ENCODE measurements at regions of chrX and their contacts with region 1.

Region 1: DNA sequence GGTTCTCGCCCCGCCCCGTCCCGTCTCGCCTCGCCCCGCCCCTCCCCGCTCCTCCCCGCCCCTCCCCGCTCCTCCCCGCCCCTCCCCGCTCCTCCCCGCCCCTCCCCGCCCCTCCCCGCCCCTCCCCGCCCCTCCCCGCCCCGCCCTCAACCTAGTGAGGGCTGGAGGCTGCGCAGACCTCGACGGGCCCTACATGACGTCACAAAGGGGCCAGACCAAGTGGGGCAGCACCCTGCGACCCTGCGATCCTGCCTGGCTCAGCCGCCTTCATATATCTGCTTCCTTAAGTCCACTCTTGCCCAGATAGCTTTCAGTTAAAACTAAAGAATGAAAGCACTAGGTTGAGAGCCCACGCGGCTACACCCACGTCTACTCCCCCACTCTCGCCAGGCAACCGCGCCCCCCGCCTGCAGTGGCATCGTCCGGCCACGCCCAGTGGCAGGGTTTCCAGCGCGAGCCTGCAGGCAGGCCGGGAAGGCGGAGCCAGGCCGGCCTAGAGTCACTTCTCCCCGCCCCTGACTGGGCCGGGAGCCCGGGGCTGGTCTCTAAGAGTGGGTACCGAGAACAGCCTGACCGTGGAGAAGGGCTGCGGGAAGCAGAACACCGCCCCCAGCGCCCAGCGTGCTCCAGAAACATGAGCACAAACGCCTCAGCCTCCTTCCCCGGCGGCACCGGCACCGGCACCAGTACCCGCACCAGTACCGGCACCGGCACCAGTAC is 1.5 kb upstream of the MAOA start:
- DNase-seq: peak; percentile 91
- H3K4me3 Mint-ChIP-seq: peak overlapping the region; percentile 84
- H3K27ac Mint-ChIP-seq: peak overlapping the region; percentile 100
- H3K4me1 Mint-ChIP-seq: no peaks in the 10 kb centered on the region
- H3K27me3 Mint-ChIP-seq: peaks cover 20% of the 10 kb centered on the region
- CTCF ChIP-seq: no peak

Region 2: GRCh38 chrX:43564953-43565352 is 89.6 kb before region 1 on chrX:
- CTCF ChIA-PET with region 1: interaction called, 7 read pairs
- POLR2A ChIA-PET with region 1: interaction called, 14 read pairs
- intact Hi-C with region 1: no loop called
- DNase-seq: no peak
- H3K4me3 Mint-ChIP-seq: no peak overlapping the region
- H3K27ac Mint-ChIP-seq: no peak overlapping the region
- H3K4me1 Mint-ChIP-seq: peaks cover 20% of the 10 kb centered on the region
- H3K27me3 Mint-ChIP-seq: peaks cover 80% of the 10 kb centered on the region
- CTCF ChIP-seq: no peak

Region 3: DNA sequence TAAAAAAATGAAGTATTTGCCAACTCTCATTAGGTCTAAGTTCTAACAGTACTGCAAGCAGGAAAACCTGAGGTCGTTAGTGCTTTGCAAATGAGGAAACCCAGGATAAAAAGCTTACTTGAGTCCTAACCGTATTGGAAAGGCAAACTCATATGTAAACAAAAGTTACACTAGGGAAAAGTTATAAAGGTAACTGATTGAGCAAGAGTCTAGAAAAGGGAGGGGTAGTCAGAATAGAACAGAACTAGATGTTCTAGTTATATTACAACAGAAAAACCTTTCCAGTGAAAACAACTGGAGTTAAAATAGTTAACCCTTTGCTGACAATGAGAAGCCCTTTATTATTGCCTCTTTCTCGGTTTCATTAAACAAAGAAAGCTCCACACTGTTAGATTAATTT is 64.9 kb before region 1 on chrX:
- CTCF ChIA-PET with region 1: interaction called, 5 read pairs
- POLR2A ChIA-PET with region 1: interaction called, 215 read pairs
- intact Hi-C with region 1: no loop called
- DNase-seq: peak; percentile 85
- H3K4me3 Mint-ChIP-seq: peak overlapping the region; percentile 28
- H3K27ac Mint-ChIP-seq: peak overlapping the region; percentile 91
- H3K4me1 Mint-ChIP-seq: peaks cover 12% of the 10 kb centered on the region
- H3K27me3 Mint-ChIP-seq: peaks cover 16% of the 10 kb centered on the region
- CTCF ChIP-seq: no peak

Region 4: GRCh38 chrX:43644124-43644701 is 10.4 kb before region 1 on chrX:
- CTCF ChIA-PET with region 1: no interaction called
- POLR2A ChIA-PET with region 1: interaction called, 17 read pairs
- intact Hi-C with region 1: no loop called
- DNase-seq: peak; percentile 81
- H3K4me3 Mint-ChIP-seq: no peak overlapping the region
- H3K27ac Mint-ChIP-seq: peak overlapping the region; percentile 82
- H3K4me1 Mint-ChIP-seq: peaks cover 6% of the 10 kb centered on the region
- H3K27me3 Mint-ChIP-seq: peaks cover 31% of the 10 kb centered on the region
- CTCF ChIP-seq: no peak

Region 5: DNA sequence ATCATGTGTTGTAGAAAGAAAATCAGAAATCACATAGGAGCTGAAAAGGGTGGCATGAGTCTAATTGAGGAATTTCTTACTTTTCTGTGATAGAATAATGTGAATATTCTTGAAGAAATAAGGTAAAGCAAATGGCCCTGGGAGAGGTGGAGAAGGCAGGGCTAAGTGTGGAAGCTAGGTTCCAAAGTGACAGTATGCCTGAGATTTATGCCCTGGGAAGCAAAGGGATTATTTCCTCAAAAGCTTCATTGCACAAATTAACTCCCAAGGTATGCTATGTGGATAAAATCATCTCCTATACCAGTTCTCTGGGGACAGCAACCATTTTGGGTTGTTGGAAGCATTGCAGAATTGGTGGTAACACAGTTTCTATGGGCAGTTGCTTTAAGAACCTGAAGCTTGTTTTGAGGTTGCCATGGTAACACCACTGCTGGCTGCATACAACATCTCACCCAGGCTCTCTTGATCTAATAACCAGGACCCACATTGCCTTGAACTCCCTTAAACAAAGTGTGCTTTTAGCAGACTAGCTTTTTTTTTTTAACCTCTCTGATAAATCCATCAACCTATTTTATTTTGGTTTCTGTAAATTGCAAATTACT is 22.5 kb after region 1 on chrX:
- CTCF ChIA-PET with region 1: no interaction called
- POLR2A ChIA-PET with region 1: interaction called, 123 read pairs
- intact Hi-C with region 1: no loop called
- DNase-seq: peak; percentile 32
- H3K4me3 Mint-ChIP-seq: no peak overlapping the region
- H3K27ac Mint-ChIP-seq: no peak overlapping the region
- H3K4me1 Mint-ChIP-seq: peaks cover 9% of the 10 kb centered on the region
- H3K27me3 Mint-ChIP-seq: peaks cover 38% of the 10 kb centered on the region
- CTCF ChIP-seq: no peak

Region 6: GRCh38 chrX:43703211-43703791 is 48.7 kb after region 1 on chrX:
- CTCF ChIA-PET with region 1: interaction called, 5 read pairs
- POLR2A ChIA-PET with region 1: interaction called, 80 read pairs
- intact Hi-C with region 1: no loop called
- DNase-seq: peak; percentile 67
- H3K4me3 Mint-ChIP-seq: no peak overlapping the region
- H3K27ac Mint-ChIP-seq: peak overlapping the region; percentile 7
- H3K4me1 Mint-ChIP-seq: peaks cover 15% of the 10 kb centered on the region
- H3K27me3 Mint-ChIP-seq: peaks cover 60% of the 10 kb centered on the region
- CTCF ChIP-seq: no peak

Region 7: GRCh38 chrX:43750248-43750676 is 95.7 kb after region 1 on chrX:
- CTCF ChIA-PET with region 1: interaction called, 6 read pairs
- POLR2A ChIA-PET with region 1: interaction called, 4 read pairs
- intact Hi-C with region 1: loop called (anchors 5 kb)
- DNase-seq: peak; percentile 82
- H3K4me3 Mint-ChIP-seq: no peak overlapping the region
- H3K27ac Mint-ChIP-seq: no peak overlapping the region
- H3K4me1 Mint-ChIP-seq: peaks cover 8% of the 10 kb centered on the region
- H3K27me3 Mint-ChIP-seq: peaks cover 68% of the 10 kb centered on the region
- CTCF ChIP-seq: peak; percentile 66